Dendritic cell treated with granulocyte-macrophage colony-stimulating factor and Interleukin-4, amounts not matched to agents 40 ng/mL and 50 ng/mL, for 4 days (primary cell): ENCODE measurements at regions of chr12 and their contacts with region 1.

Region 1: GRCh38 chr12:27332407-27333301 is at the start of gene BMAL2:
- H3K4me3 Mint-ChIP-seq: peak within 1 kb of the TSS; percentile 98
- H3K27ac Mint-ChIP-seq: peak within 1 kb of the TSS; percentile 89
- H3K4me1 Mint-ChIP-seq: peaks cover 62% of the 10 kb centered on the region
- H3K27me3 Mint-ChIP-seq: no peaks in the 10 kb centered on the region

Region 2: DNA sequence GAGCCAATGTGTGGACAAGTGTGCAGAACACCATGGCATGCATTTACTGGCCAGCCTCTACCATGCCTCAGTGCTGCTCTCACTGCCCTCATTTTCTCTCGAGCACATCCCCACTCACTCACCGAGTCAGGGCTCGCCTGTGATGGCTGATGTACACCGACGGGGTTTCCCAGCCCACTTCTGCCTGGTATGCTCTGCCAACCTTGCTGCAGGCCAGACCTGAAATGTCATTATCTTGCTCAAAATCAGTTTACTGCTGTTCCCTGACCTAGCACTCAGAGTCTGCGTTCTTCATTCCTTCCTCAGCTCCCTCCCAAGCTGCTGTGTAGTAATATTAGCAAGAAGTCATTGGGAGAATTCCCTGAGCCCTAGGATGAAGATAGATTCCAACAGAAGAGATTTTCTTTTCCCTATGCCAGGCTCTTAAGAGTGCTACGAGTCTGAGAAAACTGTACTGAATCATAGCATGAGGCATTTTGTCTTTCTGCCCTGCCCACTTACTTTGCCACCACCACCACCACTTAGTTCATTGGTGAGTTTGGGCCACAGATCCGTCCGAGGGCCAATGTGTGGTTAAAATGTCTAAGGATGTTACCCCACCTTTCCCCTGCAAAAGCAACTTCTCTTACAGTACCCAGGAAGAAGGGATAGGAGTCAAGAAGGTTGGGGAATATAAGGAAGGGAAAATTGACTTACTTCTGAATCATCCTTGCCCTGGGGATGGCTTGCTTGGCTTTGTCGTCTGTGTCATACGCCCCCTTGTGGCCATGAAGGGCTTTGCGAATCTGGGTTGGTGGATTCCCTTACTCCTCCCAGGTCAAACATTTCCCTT is 51.0 kb after region 1 on chr12:
- intact Hi-C with region 1: loop called (anchors 1 kb)
- H3K4me3 Mint-ChIP-seq: no peak overlapping the region
- H3K27ac Mint-ChIP-seq: no peak overlapping the region
- H3K4me1 Mint-ChIP-seq: no peaks in the 10 kb centered on the region
- H3K27me3 Mint-ChIP-seq: no peaks in the 10 kb centered on the region

Region 3: DNA sequence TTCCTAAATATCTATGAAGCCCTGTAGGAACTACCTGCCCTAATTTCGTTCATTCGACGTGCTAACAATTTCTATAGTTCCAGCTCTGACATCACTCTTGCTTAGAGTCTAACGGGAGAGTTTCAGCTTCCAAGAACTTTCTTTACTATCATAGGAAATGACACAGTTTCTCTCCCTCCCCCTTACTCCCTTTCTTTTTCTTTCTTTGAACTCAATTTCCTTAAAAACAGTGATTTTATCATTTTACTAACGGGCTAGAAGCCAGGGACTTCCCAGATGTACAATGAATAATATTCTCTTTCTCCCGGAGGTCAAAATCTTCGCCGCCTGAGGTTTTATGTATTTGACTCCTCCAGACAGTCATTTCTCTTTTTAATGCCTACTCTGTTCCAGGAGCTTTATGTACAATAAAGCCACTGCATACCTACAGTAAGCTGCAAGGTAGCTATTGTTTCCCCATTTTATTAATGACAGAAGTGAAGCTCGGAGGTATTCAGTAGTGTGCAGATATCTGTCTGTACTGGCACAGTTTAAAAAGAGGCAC is 129.6 kb after region 1 on chr12:
- intact Hi-C with region 1: no loop called
- H3K4me3 Mint-ChIP-seq: peak overlapping the region; percentile 52
- H3K27ac Mint-ChIP-seq: peak overlapping the region; percentile 69
- H3K4me1 Mint-ChIP-seq: peaks cover 43% of the 10 kb centered on the region
- H3K27me3 Mint-ChIP-seq: no peaks in the 10 kb centered on the region

Region 4: GRCh38 chr12:27999521-27999920 is 666.9 kb after region 1 on chr12:
- intact Hi-C with region 1: no loop called
- H3K4me3 Mint-ChIP-seq: no peak overlapping the region
- H3K27ac Mint-ChIP-seq: no peak overlapping the region
- H3K4me1 Mint-ChIP-seq: no peaks in the 10 kb centered on the region
- H3K27me3 Mint-ChIP-seq: no peaks in the 10 kb centered on the region